ENCODE measurements at regions of chr7 and their contacts with region 1.

Region 1: GRCh38 chr7:37352974-37353948 is 95.4 kb downstream of the ELMO1 start:
- DNase-seq: peak; percentile 92
- H3K4me3 Mint-ChIP-seq: peak overlapping the region; percentile 92
- H3K27ac Mint-ChIP-seq: peak overlapping the region; percentile 94
- H3K4me1 Mint-ChIP-seq: peaks cover 73% of the 10 kb centered on the region
- H3K27me3 Mint-ChIP-seq: no peaks in the 10 kb centered on the region

Region 2: GRCh38 chr7:36487756-36488336 is 865.4 kb before region 1 on chr7:
- intact Hi-C with region 1: loop called (anchors 10 kb)
- DNase-seq: peak; percentile 85
- H3K4me3 Mint-ChIP-seq: no peak overlapping the region
- H3K27ac Mint-ChIP-seq: no peak overlapping the region
- H3K4me1 Mint-ChIP-seq: peaks cover 4% of the 10 kb centered on the region
- H3K27me3 Mint-ChIP-seq: peaks cover 12% of the 10 kb centered on the region

Region 3: GRCh38 chr7:36806891-36807290 is 546.4 kb before region 1 on chr7:
- intact Hi-C with region 1: no loop called
- DNase-seq: peak; percentile 41
- H3K4me3 Mint-ChIP-seq: no peak overlapping the region
- H3K27ac Mint-ChIP-seq: no peak overlapping the region
- H3K4me1 Mint-ChIP-seq: peaks cover 11% of the 10 kb centered on the region
- H3K27me3 Mint-ChIP-seq: peaks cover 19% of the 10 kb centered on the region

Region 4: GRCh38 chr7:37208528-37208927 is 144.7 kb before region 1 on chr7:
- intact Hi-C with region 1: loop called (anchors 1 kb)
- DNase-seq: peak; percentile 83
- H3K4me3 Mint-ChIP-seq: no peak overlapping the region
- H3K27ac Mint-ChIP-seq: no peak overlapping the region
- H3K4me1 Mint-ChIP-seq: peaks cover 15% of the 10 kb centered on the region
- H3K27me3 Mint-ChIP-seq: no peaks in the 10 kb centered on the region

Region 5: GRCh38 chr7:37311355-37311754 is 41.9 kb before region 1 on chr7:
- intact Hi-C with region 1: loop called (anchors 1 kb)
- DNase-seq: no peak
- H3K4me3 Mint-ChIP-seq: peak overlapping the region; percentile 49
- H3K27ac Mint-ChIP-seq: peak overlapping the region; percentile 92
- H3K4me1 Mint-ChIP-seq: peaks cover 48% of the 10 kb centered on the region
- H3K27me3 Mint-ChIP-seq: no peaks in the 10 kb centered on the region

Region 6: DNA sequence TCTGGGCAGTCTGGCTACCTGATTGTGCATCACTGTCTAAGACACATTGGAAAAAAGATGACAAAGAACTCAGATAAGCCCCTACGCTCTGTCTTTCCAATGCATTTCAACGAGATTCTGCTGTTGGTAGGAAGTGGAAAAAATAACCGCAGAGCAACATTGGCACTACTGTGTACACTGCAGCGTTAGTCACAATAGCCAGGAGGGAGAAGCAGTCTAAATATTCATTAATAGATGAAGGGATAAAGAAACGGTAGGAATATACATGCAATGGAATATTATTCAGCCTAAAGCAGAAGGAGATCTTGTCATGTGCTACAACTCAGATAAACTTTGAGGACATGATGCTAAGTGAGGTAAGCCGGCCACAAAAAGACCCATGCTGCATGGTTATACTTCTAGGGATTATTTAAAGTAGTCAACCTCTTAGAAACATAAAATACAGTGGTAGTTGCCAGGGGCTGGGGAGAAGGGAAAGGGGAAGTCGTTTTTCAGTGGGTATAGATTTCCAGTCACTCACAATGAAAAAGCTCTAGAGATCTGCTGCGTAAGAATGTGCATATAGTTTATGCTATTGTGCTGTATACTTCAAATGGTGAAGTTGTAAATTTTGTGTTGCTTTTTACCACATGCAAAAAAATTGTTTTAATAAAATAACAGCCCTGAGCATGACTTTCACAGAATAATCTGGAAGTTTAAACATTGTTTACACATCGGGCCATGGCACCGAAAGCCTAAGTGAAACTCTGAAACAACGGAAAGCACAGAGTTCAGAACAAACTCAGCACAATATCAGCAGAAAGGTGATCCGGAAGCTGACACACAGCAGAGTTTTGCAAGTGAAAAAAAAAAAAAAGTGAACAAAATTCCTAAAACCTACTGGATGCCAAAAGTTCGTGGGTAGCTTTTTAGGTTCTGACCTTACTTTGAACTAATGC is 55.3 kb after region 1 on chr7:
- intact Hi-C with region 1: loop called (anchors 1 kb)
- DNase-seq: peak; percentile 77
- H3K4me3 Mint-ChIP-seq: peak overlapping the region; percentile 81
- H3K27ac Mint-ChIP-seq: peak overlapping the region; percentile 91
- H3K4me1 Mint-ChIP-seq: peaks cover 56% of the 10 kb centered on the region
- H3K27me3 Mint-ChIP-seq: no peaks in the 10 kb centered on the region

Region 7: GRCh38 chr7:37495574-37496184 is 142.4 kb after region 1 on chr7:
- intact Hi-C with region 1: loop called (anchors 2 kb)
- DNase-seq: peak; percentile 62
- H3K4me3 Mint-ChIP-seq: no peak overlapping the region
- H3K27ac Mint-ChIP-seq: no peak overlapping the region
- H3K4me1 Mint-ChIP-seq: peaks cover 5% of the 10 kb centered on the region
- H3K27me3 Mint-ChIP-seq: peaks cover 1% of the 10 kb centered on the region